Left cardiac atrium (tissue), 4 donors: ENCODE measurements at regions of chr18 and their contacts with region 1.

Region 1: DNA sequence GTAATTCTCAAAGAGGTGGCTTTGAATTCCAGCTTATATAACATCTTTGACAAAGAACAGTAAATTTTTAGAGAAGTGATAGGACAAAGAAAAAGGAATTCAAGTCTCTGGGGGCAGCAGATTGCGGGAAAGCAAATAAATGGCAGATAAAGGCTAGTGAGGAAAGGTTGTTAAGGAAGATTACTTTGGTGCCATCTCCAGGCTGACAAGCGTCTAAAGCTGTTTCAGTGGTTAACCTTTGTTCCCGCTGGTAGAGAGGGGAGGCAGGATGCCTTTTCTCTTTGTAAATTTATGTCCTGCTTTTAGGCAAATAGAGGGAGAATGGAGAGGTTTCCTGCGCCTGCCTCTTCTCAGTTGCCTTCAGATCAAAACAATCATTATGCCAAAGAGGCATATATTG is 431.2 kb upstream of the CHST9 start:
- DNase-seq: no peak
- ATAC-seq: no peak

Region 2: GRCh38 chr18:27483276-27483675 is 133.0 kb before region 1 on chr18:
- intact Hi-C with region 1: no loop called
- DNase-seq: no peak
- ATAC-seq: no peak

Region 3: GRCh38 chr18:27685807-27686412 is 69.6 kb after region 1 on chr18:
- intact Hi-C with region 1: loop called in 1 of 2 experiments (anchors 10 kb)
- DNase-seq: no peak
- ATAC-seq: no peak